IMR-90 (cell line): ENCODE measurements at regions of chr18 and their contacts with region 1.

Region 1: GRCh38 chr18:9516437-9517064 is 41.2 kb downstream of the RALBP1 start:
- DNase-seq: peak; percentile 46
- ATAC-seq: 0 out of 2 replicates have a peak, but pooled peaks have one; percentile 8
- H3K4me3 ChIP-seq: no peak overlapping the region
- H3K27ac ChIP-seq: no peak overlapping the region
- H3K4me1 ChIP-seq: peaks cover 16% of the 10 kb centered on the region
- H3K27me3 ChIP-seq: no peaks in the 10 kb centered on the region
- CTCF ChIP-seq: peak; percentile 76
- POLR2A ChIP-seq: no peak
- RAD21 ChIP-seq: peak; percentile 82

Region 2: DNA sequence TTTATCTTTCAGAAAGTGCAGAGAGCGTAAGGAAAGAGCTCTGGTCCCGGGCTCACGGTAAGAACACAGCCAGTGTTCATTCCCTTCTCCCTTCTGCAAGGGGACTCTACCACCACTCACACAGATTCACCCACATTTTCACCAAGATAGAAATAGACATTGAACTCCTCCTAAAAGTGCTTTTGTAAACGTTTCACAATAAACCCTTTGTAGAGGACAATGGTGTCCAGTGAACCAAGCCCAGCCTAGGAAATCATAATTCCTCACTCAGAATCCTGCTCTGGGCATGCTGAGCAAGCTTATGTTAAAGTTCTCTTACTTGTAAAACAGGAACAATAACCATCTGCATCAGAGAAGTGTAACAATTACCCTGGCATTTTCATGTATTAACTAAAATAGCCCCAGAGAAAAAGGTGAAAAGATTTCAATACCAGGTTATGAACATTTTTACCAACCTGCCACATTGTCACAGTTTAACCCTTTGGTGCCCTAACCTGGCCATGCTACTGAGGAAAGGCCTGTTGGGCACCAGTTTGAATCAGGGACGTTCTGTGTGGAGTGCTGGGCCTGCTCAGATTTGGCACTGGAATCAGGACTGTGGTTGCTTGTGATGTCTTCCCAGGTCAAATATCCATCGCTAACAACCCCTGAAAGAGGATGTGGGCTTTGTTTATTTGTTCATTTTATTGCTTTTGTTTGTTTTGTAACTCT is 436.6 kb before region 1 on chr18:
- CTCF ChIA-PET with region 1: interaction called, 3 read pairs
- POLR2A ChIA-PET with region 1: no interaction called
- dilution Hi-C with region 1: no loop called
- in situ Hi-C with region 1: no loop called
- intact Hi-C with region 1: loop called (anchors 10 kb)
- DNase-seq: no peak
- ATAC-seq: peak; percentile 21; the same call in 1 of the 2 replicates
- H3K4me3 ChIP-seq: no peak overlapping the region
- H3K27ac ChIP-seq: no peak overlapping the region
- H3K4me1 ChIP-seq: peaks cover 2% of the 10 kb centered on the region; the same call in 1 of the 2 replicates
- H3K27me3 ChIP-seq: no peaks in the 10 kb centered on the region
- CTCF ChIP-seq: no peak
- POLR2A ChIP-seq: no peak
- RAD21 ChIP-seq: no peak

Region 3: DNA sequence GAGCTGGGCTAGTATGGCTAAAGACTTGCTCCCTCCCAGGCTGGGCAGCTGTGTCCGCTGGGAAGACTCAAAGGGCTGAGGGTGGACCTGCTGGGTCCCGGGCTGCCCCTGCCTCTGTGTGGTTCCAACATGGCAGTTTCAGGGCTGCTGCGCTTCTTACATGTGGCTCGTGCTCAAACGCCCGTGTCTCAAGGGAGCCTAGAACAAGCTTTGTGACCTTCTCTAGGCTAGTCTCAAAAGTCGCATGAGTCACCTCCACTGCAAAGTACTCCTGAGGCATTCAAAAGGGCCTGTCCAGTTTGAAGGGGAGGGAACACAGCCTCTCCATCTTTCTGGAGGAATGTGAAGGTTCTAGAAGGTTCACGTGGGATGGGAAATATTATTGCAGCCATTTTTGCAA is 146.8 kb after region 1 on chr18:
- CTCF ChIA-PET with region 1: no interaction called
- POLR2A ChIA-PET with region 1: no interaction called
- dilution Hi-C with region 1: no loop called
- in situ Hi-C with region 1: no loop called
- intact Hi-C with region 1: no loop called
- DNase-seq: no peak
- ATAC-seq: no peak
- H3K4me3 ChIP-seq: no peak overlapping the region
- H3K27ac ChIP-seq: no peak overlapping the region
- H3K4me1 ChIP-seq: no peaks in the 10 kb centered on the region
- H3K27me3 ChIP-seq: no peaks in the 10 kb centered on the region
- CTCF ChIP-seq: no peak
- POLR2A ChIP-seq: no peak
- RAD21 ChIP-seq: no peak